Activated CD8-positive, alpha-beta memory T cell treated with anti-CD3 and anti-CD28 coated beads, Interleukin-2, amount 10 ng/mL, durations not matched to agents 7 days and 5 days (primary cell): ENCODE measurements at regions of chr14 and their contacts with region 1.

Region 1: GRCh38 chr14:64434528-64434927 is 30.8 kb upstream of the AKAP5 start:
- DNase-seq: no peak
- ATAC-seq: no peak
- H3K4me3 Mint-ChIP-seq: no peak overlapping the region
- H3K27ac Mint-ChIP-seq: no peak overlapping the region
- H3K4me1 Mint-ChIP-seq: peaks cover 19% of the 10 kb centered on the region
- H3K27me3 Mint-ChIP-seq: no peaks in the 10 kb centered on the region

Region 2: GRCh38 chr14:64394977-64395633 is 39.4 kb before region 1 on chr14:
- CTCF ChIA-PET with region 1: interaction called, 10 read pairs
- DNase-seq: no peak
- ATAC-seq: no peak
- H3K4me3 Mint-ChIP-seq: no peak overlapping the region
- H3K27ac Mint-ChIP-seq: peak overlapping the region; percentile 18
- H3K4me1 Mint-ChIP-seq: peaks cover 57% of the 10 kb centered on the region
- H3K27me3 Mint-ChIP-seq: no peaks in the 10 kb centered on the region

Region 3: DNA sequence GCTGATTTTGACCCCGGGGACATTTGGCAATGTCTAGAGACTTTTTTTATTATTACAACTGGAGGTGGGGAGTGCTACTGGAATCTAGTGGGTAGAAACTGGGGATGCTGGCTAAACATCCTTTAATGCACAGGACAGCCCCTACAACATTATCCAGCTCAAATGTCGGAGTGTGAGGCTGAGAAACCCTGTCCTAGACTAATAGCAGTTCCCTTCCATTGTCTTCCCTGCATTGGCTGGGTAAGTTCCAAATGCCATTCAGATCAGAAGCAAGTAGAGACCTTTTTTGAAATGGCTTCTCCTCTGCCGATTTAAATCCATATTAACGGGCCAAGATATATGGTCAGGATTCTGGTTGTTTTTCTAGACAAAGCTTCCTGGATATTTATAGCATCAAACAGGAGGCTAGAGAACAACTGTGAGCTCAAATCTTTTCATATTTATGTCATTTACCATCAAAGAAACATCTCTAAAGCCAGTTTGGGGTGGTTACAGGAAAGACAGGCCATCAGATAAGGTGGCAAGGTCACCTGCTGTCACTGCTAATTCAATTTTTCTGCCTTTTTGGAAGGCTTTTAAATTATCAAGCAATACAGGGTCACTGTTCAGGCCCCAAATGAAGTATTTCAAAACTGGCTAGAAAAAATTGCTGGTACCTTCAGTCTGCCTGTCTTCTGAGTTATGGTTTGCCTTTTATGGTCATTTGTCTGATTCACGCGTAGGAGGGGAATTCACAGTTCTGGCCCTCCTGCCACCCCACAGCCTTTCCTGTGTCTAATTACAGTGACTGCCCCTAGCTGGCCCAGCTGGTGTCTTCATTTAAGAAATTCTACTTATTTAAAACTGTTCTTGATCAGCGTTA is 10.7 kb after region 1 on chr14:
- CTCF ChIA-PET with region 1: interaction called, 61 read pairs
- DNase-seq: peak; percentile 78
- ATAC-seq: peak; percentile 86
- H3K4me3 Mint-ChIP-seq: no peak overlapping the region
- H3K27ac Mint-ChIP-seq: peak overlapping the region; percentile 90
- H3K4me1 Mint-ChIP-seq: peaks cover 55% of the 10 kb centered on the region
- H3K27me3 Mint-ChIP-seq: no peaks in the 10 kb centered on the region

Region 4: GRCh38 chr14:64478634-64479250 is 44.2 kb after region 1 on chr14:
- CTCF ChIA-PET with region 1: interaction called, 24 read pairs
- DNase-seq: no peak
- ATAC-seq: no peak
- H3K4me3 Mint-ChIP-seq: no peak overlapping the region
- H3K27ac Mint-ChIP-seq: no peak overlapping the region
- H3K4me1 Mint-ChIP-seq: peaks cover 25% of the 10 kb centered on the region
- H3K27me3 Mint-ChIP-seq: no peaks in the 10 kb centered on the region